ENCODE measurements at regions of chr11 and their contacts with region 1.

Region 1: GRCh38 chr11:798093-798713 is at the start of gene SLC25A22:
- DNase-seq: peak; percentile 88
- H3K4me3 ChIP-seq: peak within 1 kb of the TSS; percentile 93
- H3K27ac ChIP-seq: peak within 1 kb of the TSS; percentile 75
- H3K4me1 ChIP-seq: peaks cover 20% of the 10 kb centered on the region
- CTCF ChIP-seq: peak; percentile 73
- total RNA-seq, gene SLC25A22: 22.7 and 30.8 TPM in 2 replicates

Region 2: DNA sequence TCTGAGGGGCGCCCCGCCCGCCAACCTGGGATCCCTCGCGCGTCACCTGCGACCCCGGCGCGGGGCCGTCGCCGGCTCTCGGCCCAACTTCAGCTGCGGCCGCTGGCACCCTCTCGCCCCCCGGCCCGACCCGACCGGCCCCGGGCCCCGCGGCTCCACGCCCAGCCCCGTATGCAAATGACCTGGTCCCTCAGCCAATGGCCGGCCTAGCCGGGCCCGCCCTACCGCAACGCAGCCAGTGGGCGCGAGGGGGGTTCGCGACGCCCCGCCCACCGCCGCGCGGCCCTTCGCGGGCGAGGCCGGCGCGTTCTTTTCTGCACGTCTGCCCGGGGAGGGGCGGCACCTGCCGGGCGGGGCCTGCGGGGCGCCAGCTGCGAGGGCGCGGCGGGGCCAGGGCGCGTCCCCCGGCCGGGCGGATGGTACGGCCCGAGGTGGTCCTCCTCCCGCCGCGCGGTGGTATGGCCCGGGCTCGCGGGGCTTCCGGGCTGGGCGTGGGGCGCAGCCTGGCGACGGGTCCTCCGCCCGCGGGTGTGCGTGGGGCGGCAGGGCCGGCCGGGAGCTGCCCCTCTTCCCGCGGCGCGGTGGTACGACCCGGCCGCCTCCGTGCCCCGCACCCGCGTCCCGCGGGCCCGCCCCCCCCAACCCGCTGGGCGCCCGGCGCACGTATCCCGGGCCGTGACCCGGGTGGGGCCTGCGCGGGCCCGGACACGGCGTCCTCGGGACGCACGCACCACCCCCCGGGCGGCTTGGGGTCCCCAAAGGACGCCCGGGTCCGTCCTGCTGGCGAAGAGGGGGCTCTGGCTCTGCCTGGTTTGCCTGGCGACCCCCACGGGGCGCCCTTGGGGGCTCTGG is 229.7 kb before region 1 on chr11:
- CTCF ChIA-PET with region 1: no interaction called
- POLR2A ChIA-PET with region 1: no interaction called
- intact Hi-C with region 1: loop called (anchors 5 kb)
- DNase-seq: peak; percentile 97
- H3K4me3 ChIP-seq: peak overlapping the region; percentile 84
- H3K27ac ChIP-seq: no peak overlapping the region
- H3K4me1 ChIP-seq: peaks cover 18% of the 10 kb centered on the region
- CTCF ChIP-seq: no peak

Region 3: DNA sequence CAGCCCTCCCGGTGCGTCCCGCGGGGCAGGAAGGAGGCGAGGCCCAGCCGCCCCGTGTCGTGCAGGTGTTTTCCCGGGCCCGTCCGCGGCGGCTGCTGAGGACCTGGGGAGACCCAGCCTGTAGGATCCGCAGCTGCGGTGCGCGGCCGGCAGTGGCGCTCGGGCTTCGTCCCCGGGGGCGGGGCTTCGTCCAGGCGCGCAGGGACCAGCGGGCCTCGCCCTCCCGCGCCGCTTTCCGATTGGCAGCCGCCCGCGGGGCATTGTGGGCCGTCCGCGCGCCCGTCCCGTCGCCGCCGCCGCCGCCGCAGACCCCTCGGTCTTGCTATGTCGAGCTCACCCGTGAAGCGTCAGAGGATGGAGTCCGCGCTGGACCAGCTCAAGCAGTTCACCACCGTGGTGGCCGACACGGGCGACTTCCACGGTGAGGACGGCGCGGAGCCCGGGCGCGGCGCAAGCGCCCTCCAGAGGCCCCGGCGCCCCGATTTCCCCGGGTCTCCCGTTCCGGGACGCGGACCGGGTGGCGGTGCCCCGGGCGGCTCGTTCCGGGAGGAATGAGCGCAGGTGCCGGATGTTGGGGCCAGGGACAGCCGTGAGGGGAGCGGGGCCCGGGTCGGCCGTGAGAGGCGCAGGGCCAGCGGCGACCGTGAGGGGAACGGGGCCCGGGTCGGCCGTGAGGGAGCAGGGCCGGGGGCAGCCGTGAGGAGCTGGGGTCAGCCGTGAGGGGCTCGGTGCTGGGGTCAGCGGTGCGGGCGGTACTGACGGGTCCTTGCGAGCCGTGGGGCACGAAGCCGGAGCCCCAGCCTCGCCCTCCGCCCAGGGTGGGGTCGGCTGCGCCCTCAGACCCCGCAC is 50.8 kb before region 1 on chr11 and contains the start of gene TALDO1:
- CTCF ChIA-PET with region 1: no interaction called
- POLR2A ChIA-PET with region 1: no interaction called
- intact Hi-C with region 1: loop called (anchors 5 kb)
- DNase-seq: peak; percentile 94
- H3K4me3 ChIP-seq: peak within 1 kb of the TSS; percentile 93
- H3K27ac ChIP-seq: peak within 1 kb of the TSS; percentile 68
- H3K4me1 ChIP-seq: peaks cover 22% of the 10 kb centered on the region
- CTCF ChIP-seq: peak; percentile 49; the same call in 1 of the 2 replicates
- total RNA-seq, gene TALDO1: 209 and 226 TPM in 2 replicates

Region 4: DNA sequence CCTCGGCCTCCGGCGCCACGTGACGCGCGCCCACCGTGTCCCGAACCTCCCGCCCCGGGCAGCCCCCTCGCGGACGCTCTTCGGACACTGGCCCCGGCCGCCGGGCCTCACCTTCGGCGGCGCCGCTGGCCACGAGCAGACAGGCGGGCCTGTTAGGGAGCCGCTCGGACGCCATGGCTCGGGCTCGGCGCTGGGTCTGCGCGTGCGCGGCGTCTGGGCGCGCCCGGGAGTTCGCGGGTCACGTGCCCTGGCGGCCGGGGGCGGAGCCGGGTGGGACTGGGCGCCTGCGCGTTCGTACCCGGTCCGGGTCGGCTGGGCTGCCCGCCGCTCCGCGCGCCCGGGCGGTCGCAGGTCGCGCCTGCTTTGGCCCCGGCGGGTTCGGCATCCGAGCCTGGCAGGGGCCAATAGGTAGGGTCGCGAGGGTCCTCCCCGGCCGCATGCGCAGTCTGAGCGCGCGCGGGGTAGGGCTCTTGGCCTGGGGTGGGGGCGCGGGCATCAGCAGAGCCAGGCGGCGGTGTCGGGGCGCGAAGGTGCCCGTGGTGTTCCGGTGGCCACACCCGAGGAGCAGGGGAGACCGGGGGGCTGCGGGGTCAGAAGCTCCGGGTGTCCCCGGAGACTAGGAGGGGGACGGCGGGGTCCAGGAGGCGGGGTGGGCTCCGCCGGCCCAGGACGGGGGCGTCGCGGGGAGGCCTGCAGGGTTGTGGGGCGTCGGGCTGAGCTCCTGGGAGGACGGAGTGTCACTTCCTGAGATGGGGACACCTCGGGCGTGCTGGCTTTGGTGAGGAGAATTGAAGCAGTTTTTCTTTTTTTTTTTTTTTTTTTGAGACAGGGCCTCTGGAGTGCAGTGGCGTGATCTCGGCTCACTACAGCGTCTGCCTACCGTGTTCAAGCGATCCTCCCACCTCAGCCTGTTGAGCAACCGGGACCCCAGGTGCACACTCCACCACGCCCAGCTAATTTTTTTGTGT is 20.6 kb before region 1 on chr11 and contains the start of gene GATD1:
- CTCF ChIA-PET with region 1: no interaction called
- POLR2A ChIA-PET with region 1: interaction called, 9 read pairs
- intact Hi-C with region 1: loop called (anchors 2 kb)
- DNase-seq: peak; percentile 93
- H3K4me3 ChIP-seq: peak within 1 kb of the TSS; percentile 95
- H3K27ac ChIP-seq: peak within 1 kb of the TSS; percentile 57
- H3K4me1 ChIP-seq: peaks cover 22% of the 10 kb centered on the region
- CTCF ChIP-seq: no peak
- total RNA-seq, gene GATD1: 73.3 and 109 TPM in 2 replicates